ENCODE measurements at regions of chr3 and their contacts with region 1.

Region 1: DNA sequence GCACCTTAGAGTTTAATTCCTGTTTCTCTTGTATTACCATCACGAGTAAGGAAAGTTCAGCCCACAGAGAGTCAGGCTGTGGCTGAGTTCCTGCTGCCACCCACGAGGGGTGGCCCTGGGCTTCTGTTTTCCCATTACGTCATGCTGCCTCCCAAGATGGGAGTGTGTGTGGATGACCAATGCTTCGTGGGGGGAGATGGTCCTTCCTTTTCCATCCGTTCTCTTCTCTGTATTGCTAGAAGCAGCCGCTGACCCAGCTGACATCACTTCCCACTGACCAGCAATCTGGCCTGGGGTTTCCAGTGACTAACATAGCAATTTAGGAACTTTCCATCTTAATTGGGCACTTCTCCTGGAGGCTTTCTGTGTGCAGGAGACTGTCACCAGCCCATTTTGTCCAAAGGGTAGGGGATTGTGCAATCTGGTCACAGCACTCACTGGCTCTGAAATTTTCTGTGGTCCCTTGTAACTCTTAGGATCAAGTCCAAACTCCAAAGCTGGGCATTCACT is 9.3 kb downstream of the IRAK2 start:
- DNase-seq: peak; percentile 43 to 72
- H3K4me3 ChIP-seq: no peak overlapping the region
- H3K27ac ChIP-seq: peak overlapping the region; percentile 61
- H3K4me1 ChIP-seq: peaks cover 21% of the 10 kb centered on the region
- H3K27me3 ChIP-seq: no peaks in the 10 kb centered on the region
- CTCF ChIP-seq: no peak

Region 2: GRCh38 chr3:10115326-10116137 is 58.4 kb before region 1 on chr3 and contains the start of gene BRK1:
- CTCF ChIA-PET with region 1: interaction called, 14 read pairs
- POLR2A ChIA-PET with region 1: no interaction called
- intact Hi-C with region 1: no loop called
- DNase-seq: peak; percentile 76 to 84
- H3K4me3 ChIP-seq: peak within 1 kb of the TSS; percentile 75
- H3K27ac ChIP-seq: peak within 1 kb of the TSS; percentile 41; the same call in 1 of the 2 replicates
- H3K4me1 ChIP-seq: peaks cover 8% of the 10 kb centered on the region
- H3K27me3 ChIP-seq: no peaks in the 10 kb centered on the region
- CTCF ChIP-seq: no peak
- total RNA-seq, gene BRK1: 73.8 and 109 TPM in 2 replicates

Region 3: GRCh38 chr3:10185804-10186762 is 12.1 kb after region 1 on chr3:
- CTCF ChIA-PET with region 1: interaction called, 3 read pairs
- POLR2A ChIA-PET with region 1: interaction called, 30 read pairs
- intact Hi-C with region 1: no loop called
- DNase-seq: no peak
- H3K4me3 ChIP-seq: no peak overlapping the region
- H3K27ac ChIP-seq: no peak overlapping the region
- H3K4me1 ChIP-seq: peaks cover 33% of the 10 kb centered on the region
- H3K27me3 ChIP-seq: no peaks in the 10 kb centered on the region
- CTCF ChIP-seq: no peak

Region 4: DNA sequence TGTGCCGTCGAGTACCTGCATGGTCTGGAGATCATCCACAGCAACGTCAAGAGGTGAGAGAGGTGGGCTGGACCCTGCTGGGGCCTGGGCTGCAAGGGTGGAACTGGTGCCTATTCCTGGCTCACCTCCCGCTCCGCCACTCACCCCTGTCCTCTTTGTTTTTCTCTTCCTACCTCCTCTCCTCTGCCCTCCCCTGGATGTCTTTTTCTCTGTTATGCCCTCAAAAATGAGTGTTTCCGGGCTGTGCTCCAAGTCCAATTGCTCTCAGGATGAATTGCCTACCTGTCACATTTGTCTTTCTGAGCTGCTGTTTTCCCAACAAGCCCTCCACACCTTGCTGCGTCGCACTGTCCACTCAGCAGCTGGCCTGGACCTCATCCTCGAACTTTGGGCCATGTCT is 45.8 kb after region 1 on chr3:
- CTCF ChIA-PET with region 1: no interaction called
- POLR2A ChIA-PET with region 1: no interaction called
- intact Hi-C with region 1: loop called (anchors 2 kb)
- DNase-seq: no peak
- H3K4me3 ChIP-seq: no peak overlapping the region
- H3K27ac ChIP-seq: peak overlapping the region; percentile 84
- H3K4me1 ChIP-seq: peaks cover 45% of the 10 kb centered on the region
- H3K27me3 ChIP-seq: no peaks in the 10 kb centered on the region
- CTCF ChIP-seq: no peak

Region 5: DNA sequence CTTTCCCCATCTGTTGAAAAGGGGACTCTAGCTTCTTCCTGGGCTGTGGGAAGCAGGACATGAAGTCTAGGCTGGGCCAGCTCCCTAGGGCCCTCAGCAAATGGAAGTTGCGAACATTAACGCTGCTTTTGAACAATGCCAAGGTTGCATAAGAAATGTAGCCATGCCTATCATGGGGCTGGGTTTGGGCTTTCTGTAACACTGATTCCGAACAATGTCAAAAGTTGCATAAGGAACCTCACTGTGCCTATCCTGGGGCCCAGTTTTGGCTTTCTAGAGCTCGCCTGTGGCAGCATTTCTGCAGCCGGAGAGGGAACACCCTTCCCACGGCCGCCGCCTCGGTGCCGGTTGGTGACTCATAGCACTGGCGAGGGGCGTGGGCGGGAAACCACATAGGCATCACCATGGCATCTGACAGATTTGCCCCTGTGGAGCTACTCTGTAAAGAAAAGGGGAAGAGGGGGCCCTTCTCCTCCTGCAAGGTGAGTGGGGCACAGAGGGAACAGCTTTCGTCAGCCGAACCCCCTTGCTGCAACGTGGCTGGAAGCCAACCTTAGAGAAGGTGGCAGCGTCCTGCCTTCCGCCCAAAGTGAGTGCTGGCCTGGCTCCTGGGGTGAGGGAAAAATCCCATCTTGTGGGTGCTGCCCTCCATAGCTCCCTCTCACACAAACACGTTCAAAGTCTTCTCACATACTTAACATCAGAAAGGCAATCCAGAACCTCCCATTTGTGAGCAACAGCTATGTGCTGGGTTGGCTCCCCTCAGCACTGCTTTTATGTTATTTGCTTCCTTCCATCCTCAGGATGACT is 378.0 kb after region 1 on chr3:
- CTCF ChIA-PET with region 1: no interaction called
- POLR2A ChIA-PET with region 1: no interaction called
- intact Hi-C with region 1: no loop called
- DNase-seq: peak in 1 of 2 experiments; percentile 24
- H3K4me3 ChIP-seq: no peak overlapping the region
- H3K27ac ChIP-seq: no peak overlapping the region
- H3K4me1 ChIP-seq: no peaks in the 10 kb centered on the region
- H3K27me3 ChIP-seq: peaks cover 91% of the 10 kb centered on the region
- CTCF ChIP-seq: no peak

Measured in PC-9 (cell line).